Aorta (tissue), 5 donors: ENCODE measurements at regions of chr19 and their contacts with region 1.

Region 1: DNA sequence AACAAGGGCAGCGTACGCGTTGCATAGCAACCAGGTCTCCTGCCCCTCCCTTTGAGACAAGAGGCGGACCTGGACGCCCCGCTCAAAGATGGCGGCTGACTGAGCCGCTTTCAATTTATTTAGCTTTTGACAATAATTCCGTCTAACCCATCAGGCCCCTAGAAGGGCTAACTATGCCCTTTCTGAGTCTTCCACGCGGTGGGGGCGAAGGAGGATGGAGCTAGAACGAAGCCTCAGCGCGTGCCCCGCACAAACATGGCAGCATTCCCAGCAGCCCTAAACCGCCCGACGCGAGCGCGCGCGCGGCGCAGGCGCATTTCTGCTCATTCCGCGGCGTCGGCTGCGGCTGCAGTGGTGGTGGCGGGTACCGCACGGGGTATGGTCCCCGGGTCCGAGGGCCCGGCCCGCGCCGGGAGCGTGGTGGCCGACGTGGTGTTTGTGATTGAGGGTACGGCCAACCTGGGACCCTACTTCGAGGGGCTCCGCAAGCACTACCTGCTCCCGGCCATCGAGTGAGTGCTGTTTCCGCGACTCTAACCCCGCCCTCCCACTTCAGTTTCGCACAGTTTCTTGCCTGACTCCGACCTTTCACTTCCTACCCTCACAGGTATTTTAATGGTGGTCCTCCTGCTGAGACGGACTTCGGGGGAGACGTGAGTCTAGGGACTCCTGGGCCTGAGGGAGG is at the start of gene MED25:
- DNase-seq: peak; percentile 93 to 96
- ATAC-seq: peak; percentile 93
- H3K4me3 ChIP-seq: peak within 1 kb of the TSS; percentile 1 to 76
- H3K27ac ChIP-seq: peak within 1 kb of the TSS in 1 of 2 donors; percentile 8
- H3K4me1 ChIP-seq: no peaks in the 10 kb centered on the region
- H3K27me3 ChIP-seq: no peaks in the 10 kb centered on the region
- total RNA-seq, gene MED25: 27.2 to 40.3 TPM

Region 2: DNA sequence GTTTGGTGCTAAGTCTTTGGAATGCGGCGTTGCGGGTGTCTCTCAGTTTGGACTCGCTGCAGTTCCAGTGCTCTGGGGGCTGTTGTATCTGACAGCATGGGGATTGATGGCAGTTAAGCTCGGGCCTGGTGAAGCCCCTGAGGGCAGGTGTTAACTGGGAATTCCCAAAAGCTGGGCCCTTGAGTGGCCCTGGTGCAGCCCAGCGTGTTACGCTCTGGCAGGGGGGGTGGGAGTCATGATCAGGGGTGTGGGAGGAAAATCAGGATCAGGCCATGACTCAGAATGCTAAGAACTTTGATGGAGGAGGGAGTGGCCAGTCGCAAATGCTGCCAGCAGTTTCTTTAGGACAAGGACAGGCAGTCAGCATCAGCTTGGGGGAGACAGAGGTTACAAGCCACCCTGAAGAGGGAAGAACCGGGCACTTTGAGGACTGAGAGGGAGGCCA is 31.7 kb before region 1 on chr19:
- intact Hi-C with region 1: no loop called
- DNase-seq: no peak
- ATAC-seq: no peak
- H3K4me3 ChIP-seq: no peak overlapping the region
- H3K27ac ChIP-seq: no peak overlapping the region
- H3K4me1 ChIP-seq: no peaks in the 10 kb centered on the region
- H3K27me3 ChIP-seq: no peaks in the 10 kb centered on the region

Region 3: DNA sequence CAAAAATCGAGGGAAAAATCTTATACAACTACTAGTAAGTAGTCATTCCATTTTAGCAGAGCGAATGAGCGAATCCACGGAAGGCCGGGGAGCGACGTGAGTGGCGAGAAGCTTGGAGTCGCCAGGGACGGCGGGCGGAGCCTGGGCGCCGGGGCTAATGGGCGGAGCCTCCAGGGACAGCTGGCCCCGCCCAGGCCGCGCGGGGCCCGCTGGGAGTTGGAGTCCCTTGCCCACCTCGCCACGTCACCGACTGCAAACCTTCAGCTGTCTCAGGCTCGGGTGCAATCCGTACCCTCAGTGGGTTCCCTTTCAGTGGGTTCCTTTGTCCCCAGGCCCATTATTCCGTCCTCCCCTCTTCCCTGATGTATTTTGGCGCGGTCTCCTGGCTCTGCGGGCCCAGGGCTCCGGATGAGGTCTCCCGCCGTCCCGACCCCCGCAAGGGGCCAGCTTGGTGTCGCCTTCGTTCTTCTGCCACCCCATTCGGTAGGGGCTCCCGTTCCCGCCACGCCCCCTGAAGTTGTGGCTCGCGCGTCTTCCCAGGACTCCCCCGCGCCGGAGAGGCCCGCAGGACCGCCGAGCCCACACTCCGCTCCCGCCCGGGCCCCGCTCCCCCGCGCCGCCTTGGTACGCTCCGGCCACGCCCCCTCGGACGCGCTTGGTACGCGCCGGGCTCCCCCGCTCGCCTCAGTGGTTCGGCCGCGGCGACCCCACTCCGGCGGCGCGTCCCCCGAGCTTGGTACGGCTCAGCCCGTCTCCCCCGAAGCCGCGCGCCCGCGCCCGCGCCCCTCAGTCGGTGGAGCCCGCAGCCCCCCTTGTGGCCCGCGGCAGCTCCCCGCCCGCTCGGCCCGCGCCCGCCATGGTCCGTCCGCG is 32.6 kb after region 1 on chr19 and contains the start of gene PTOV1:
- intact Hi-C with region 1: loop called (anchors 2 to 5 kb)
- DNase-seq: peak; percentile 94 to 97
- ATAC-seq: peak; percentile 96
- H3K4me3 ChIP-seq: peak within 1 kb of the TSS; percentile 93 to 97
- H3K27ac ChIP-seq: peak within 1 kb of the TSS; percentile 84 to 99
- H3K4me1 ChIP-seq: no peaks in the 10 kb centered on the region
- H3K27me3 ChIP-seq: no peaks in the 10 kb centered on the region
- total RNA-seq, gene PTOV1: 103 to 133 TPM

Region 4: DNA sequence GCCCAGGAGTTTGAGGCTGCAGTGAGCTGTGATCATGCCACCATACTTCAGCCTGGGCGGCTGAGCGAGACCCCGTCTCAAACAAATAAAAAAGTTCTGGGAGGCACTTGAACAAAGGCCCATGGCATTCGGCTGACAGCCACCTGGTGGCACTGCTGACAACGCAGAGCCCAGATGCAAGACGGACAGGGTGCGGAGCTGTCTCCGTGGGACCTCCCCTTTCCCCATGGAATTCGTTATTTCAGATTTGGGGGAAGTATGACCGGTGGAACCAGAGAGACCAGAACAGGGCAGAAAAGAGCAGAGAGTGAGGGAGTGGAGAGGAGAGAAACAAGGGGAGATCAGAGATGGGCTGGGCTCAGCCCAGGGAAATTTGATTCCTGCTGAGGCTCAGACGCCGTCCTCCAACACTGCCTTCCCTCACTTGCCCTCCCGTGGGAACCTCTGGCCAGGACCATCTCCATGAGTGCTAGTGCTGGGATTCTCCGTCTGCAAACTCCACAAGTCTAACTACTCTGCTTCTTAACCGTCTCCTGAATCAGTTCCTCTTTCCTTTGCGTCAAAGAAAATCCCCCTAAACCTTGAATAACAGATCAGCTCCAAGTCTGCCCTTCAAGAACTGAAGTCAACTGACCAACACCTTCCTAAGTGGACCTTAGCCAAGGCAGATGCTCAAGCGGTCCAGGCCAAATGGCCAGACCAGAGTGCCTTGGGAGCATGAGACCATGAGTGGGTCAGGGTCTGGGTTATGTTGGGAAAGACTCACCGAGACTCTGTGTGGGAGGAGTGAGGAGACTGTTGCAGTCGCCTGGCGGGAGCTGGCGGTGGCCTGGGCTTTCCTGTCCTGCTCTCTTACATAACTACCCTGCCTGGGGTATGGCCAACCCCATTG is 99.0 kb after region 1 on chr19:
- intact Hi-C with region 1: no loop called
- DNase-seq: no peak
- ATAC-seq: no peak
- H3K4me3 ChIP-seq: no peak overlapping the region
- H3K27ac ChIP-seq: no peak overlapping the region
- H3K4me1 ChIP-seq: no peaks in the 10 kb centered on the region
- H3K27me3 ChIP-seq: no peaks in the 10 kb centered on the region